Right cardiac atrium (tissue), 5 donors: ENCODE measurements at regions of chr5 and their contacts with region 1.

Region 1: DNA sequence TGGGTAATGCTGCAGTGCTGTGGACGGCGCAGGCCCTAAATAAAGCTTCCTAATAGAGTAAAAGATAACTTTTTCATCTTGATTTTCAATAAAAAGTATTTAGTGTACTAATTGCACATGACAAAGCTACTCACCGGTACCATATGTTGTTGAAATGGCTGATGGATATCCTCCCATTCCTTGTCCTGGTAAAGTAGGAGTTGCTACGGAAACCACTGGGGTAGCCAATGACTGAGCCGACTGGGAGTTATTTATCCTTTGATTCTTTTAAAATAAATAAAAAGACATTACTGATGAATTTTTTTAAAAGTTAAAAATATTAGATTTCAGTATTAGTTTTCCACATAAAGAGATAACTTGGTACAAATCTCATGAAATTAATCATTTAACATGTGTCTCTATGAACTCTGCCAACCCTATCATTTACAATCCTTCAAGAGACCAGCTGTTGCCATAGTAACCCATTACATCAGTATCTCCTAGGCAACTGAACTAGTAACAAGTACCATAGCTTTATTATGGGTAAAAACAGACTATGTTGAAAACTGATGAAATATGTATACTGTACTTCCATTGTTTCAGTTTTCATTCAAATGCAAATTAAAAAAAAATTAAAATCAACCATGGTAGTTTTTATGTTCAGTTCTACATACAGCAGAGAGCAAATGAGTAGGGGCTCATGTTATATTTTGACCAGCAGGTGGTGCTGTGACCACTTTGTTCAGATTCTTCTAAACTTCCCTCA is 153.7 kb downstream of the MEF2C start:
- DNase-seq: peak; percentile 24 to 47 (median 30)
- ATAC-seq: peak; percentile 83 to 85
- H3K4me3 ChIP-seq: no peak overlapping the region
- H3K27ac ChIP-seq: no peak overlapping the region
- H3K4me1 ChIP-seq: no peaks in the 10 kb centered on the region
- H3K27me3 ChIP-seq: no peaks in the 10 kb centered on the region

Region 2: GRCh38 chr5:88833371-88834130 is 104.3 kb after region 1 on chr5:
- intact Hi-C with region 1: loop called in 1 of 4 experiments (anchors 10 kb)
- DNase-seq: peak; percentile 51 to 69 (median 62)
- ATAC-seq: peak; percentile 83 to 86
- H3K4me3 ChIP-seq: peak overlapping the region; percentile 67
- H3K27ac ChIP-seq: peak overlapping the region; percentile 98
- H3K4me1 ChIP-seq: peaks cover 4% of the 10 kb centered on the region
- H3K27me3 ChIP-seq: no peaks in the 10 kb centered on the region

Region 3: DNA sequence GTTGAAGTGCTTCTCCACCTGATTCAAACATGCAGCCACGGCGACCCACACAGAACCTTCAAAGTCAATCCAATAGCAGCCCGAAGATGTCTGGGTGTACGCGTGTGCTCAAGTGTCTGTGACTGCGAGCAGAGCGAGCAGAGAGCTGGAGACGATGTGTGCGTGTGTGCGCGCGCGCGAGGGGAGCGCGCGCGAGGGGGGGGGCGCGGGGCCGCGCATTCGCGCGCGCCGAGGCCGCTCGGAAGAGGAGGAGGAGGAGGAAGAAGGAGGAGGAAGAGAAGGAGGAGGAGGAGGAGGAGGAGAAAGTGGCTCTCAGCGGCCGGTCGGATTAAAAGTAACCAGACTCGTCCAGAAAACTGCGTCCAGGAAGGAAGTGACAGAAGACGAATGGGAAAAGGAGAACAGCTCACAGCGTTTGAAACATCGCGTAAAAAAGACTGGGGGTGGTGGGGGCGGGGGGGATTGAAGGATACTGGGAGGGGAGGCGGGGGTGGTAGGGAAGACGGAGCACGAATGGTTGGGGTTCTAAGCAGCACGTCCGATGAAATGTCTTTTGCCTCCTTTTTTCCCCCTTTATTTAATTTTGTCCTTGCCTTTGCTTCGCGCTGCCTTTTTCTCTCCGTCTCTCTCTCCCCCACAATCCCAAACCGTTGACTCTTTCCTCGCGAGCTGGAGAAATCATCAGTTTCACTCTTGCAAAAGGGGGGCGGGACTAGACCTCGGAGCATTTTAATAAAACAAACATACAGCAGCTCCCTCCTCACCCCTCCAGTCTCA is 154.0 kb after region 1 on chr5 and contains the start of gene MEF2C:
- intact Hi-C with region 1: loop called (anchors 5 to 10 kb)
- DNase-seq: peak; percentile 73 to 93 (median 90)
- ATAC-seq: peak; percentile 90 to 92
- H3K4me3 ChIP-seq: peak within 1 kb of the TSS; percentile 99
- H3K27ac ChIP-seq: peak within 1 kb of the TSS; percentile 99
- H3K4me1 ChIP-seq: no peaks in the 10 kb centered on the region
- H3K27me3 ChIP-seq: no peaks in the 10 kb centered on the region
- total RNA-seq, gene MEF2C: 57.4 to 78.4 (median 67.4) TPM

Region 4: GRCh38 chr5:88889189-88890069 is 160.2 kb after region 1 on chr5:
- intact Hi-C with region 1: loop called (anchors 5 to 10 kb)
- DNase-seq: peak; percentile 70 to 90 (median 88)
- ATAC-seq: peak; percentile 91 to 94
- H3K4me3 ChIP-seq: peak overlapping the region; percentile 50
- H3K27ac ChIP-seq: peak overlapping the region; percentile 91
- H3K4me1 ChIP-seq: peaks cover 2% of the 10 kb centered on the region
- H3K27me3 ChIP-seq: no peaks in the 10 kb centered on the region

Region 5: GRCh38 chr5:90184764-90185163 is 1455.5 kb after region 1 on chr5:
- intact Hi-C with region 1: loop called in 1 of 4 experiments (anchors 5 kb)
- DNase-seq: no peak
- ATAC-seq: no peak
- H3K4me3 ChIP-seq: no peak overlapping the region
- H3K27ac ChIP-seq: no peak overlapping the region
- H3K4me1 ChIP-seq: no peaks in the 10 kb centered on the region
- H3K27me3 ChIP-seq: no peaks in the 10 kb centered on the region

Region 6: DNA sequence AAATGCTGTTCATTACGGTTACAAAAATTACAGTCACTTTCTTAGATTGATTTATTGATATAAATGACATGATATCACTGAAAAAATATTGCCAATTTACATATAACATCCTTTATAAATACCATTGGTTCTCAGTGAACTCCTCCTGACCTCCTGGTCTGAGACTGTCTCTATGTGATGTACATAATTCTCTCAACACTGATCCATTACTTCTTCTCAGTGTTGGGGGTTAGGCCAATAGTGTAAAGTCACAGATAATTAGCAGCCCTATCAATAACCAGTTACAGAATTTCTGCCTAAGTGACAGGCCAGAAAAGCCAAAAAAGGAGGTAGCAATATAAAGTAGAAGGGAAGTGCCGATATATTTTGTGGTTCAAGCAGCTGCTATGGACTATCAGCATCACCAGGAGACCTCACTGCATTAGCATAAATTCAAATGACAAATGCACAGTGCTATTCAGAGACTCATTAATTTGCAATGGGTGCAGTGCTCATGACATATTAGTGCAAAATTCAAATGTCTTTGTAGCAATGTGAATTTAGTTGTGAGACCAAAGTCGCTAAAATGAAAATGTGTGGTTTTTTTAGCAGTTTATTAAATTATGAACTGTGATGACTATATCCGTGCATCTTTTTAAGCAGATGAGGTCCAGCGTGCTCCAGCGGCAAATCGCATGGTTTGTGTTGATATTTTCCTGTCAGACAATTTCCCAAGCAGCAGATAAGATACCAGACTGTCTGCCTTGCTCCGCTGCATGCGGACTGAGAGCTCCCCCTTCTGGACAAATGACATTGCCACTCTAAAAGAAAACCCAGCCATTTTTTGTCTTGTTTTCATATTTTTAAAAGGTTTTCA is 1535.7 kb after region 1 on chr5:
- intact Hi-C with region 1: loop called in 1 of 4 experiments (anchors 10 kb)
- DNase-seq: peak; percentile 44 to 72 (median 72)
- ATAC-seq: peak; percentile 63 to 80
- H3K4me3 ChIP-seq: no peak overlapping the region
- H3K27ac ChIP-seq: no peak overlapping the region
- H3K4me1 ChIP-seq: no peaks in the 10 kb centered on the region
- H3K27me3 ChIP-seq: no peaks in the 10 kb centered on the region